ENCODE measurements at regions of chr2 and their contacts with region 1.

Region 1: DNA sequence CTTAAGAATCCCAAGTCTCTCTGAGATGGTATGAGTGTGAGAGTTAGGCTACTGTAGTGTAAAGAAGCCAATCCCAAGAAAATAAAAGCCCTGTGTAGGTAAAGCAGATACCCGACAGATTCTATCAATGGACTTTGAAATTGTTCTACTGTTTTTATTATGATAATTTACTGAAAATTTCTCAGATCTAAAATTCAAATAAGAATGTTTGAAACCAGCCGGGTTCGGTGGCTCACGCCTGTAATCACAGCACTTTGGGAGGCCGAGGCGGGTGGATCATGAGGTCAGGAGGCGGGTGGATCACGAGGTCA is 208.3 kb upstream of the SPRED2 start:
- DNase-seq: no peak
- ATAC-seq: no peak
- H3K4me3 ChIP-seq: no peak overlapping the region
- H3K4me3 Mint-ChIP-seq: no peak overlapping the region
- H3K27ac ChIP-seq: no peak overlapping the region
- H3K27ac Mint-ChIP-seq: no peak overlapping the region
- H3K4me1 ChIP-seq: peaks cover 0 to 3% of the 10 kb centered on the region in 2 donors
- H3K4me1 Mint-ChIP-seq: peaks cover 4% of the 10 kb centered on the region
- H3K27me3 ChIP-seq: peaks cover 0 to 8% (median 1%) of the 10 kb centered on the region in 4 experiments
- H3K27me3 Mint-ChIP-seq: peaks cover 8% of the 10 kb centered on the region
- CTCF ChIP-seq: peak; percentile 31

Region 2: DNA sequence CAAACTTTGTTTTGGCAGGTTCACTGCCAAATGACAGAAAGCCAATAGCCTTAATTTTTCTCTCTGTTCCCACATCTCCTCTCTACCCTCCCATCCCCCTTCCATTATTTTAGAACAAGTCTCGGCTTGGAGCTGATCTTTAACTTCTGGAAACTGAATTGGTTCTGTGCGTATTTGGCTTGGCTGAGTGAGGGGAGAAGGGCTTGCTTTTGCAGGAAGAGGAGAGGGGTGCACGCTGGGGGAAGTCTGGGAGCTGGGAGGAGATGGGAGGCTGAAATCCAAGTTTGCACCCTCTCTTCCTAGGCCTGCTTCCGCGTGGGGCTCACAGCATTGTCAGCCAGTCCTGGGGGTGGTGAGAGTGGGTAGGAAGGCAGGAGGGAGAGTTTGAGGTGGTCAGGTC is 32.3 kb before region 1 on chr2:
- CTCF ChIA-PET with region 1: interaction called, 16 read pairs
- POLR2A ChIA-PET with region 1: no interaction called
- intact Hi-C with region 1: no loop called
- DNase-seq: no peak
- ATAC-seq: no peak
- H3K4me3 ChIP-seq: no peak overlapping the region
- H3K4me3 Mint-ChIP-seq: no peak overlapping the region
- H3K27ac ChIP-seq: no peak overlapping the region
- H3K27ac Mint-ChIP-seq: no peak overlapping the region
- H3K4me1 ChIP-seq: peaks cover 47 to 53% of the 10 kb centered on the region in 2 donors
- H3K4me1 Mint-ChIP-seq: peaks cover 59% of the 10 kb centered on the region
- H3K27me3 ChIP-seq: no peaks in the 10 kb centered on the region
- H3K27me3 Mint-ChIP-seq: no peaks in the 10 kb centered on the region
- CTCF ChIP-seq: no peak

Region 3: GRCh38 chr2:65866148-65866547 is 225.4 kb after region 1 on chr2:
- CTCF ChIA-PET with region 1: no interaction called
- POLR2A ChIA-PET with region 1: no interaction called
- intact Hi-C with region 1: no loop called
- DNase-seq: no peak
- ATAC-seq: no peak
- H3K4me3 ChIP-seq: no peak overlapping the region
- H3K4me3 Mint-ChIP-seq: no peak overlapping the region
- H3K27ac ChIP-seq: no peak overlapping the region
- H3K27ac Mint-ChIP-seq: no peak overlapping the region
- H3K4me1 ChIP-seq: no peaks in the 10 kb centered on the region
- H3K4me1 Mint-ChIP-seq: no peaks in the 10 kb centered on the region
- H3K27me3 ChIP-seq: peaks cover 0 to 4% (median 0%) of the 10 kb centered on the region in 4 experiments
- H3K27me3 Mint-ChIP-seq: peaks cover 13% of the 10 kb centered on the region
- CTCF ChIP-seq: no peak